A673 (cell line): ENCODE measurements at regions of chr22 and their contacts with region 1.

Region 1: DNA sequence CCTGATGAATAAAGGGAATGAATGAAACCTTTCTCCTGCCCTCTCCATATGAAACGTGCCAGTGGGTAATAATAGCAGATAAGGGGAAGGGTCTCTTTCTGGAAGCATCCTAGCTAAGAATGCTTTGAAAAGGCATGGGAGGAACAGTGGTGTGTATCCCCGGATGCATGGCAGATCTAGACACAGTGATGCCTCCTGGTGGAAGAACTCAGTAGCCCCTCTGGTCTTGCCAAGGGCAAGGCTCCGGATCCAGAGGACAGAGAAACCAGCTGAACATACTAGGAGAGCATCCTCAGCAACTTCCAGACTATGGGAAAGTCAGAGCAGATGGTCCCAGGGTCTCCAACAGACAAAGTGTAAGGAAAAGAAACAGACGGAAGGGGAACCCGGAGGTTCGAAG is 6.4 kb downstream of the BAIAP2L2 start:
- DNase-seq: no peak
- H3K4me3 ChIP-seq: no peak overlapping the region
- H3K27ac ChIP-seq: no peak overlapping the region
- H3K4me1 ChIP-seq: no peaks in the 10 kb centered on the region
- H3K27me3 ChIP-seq: no peaks in the 10 kb centered on the region
- CTCF ChIP-seq: 0 out of 2 replicates have a peak, but pooled peaks have one; percentile 26

Region 2: DNA sequence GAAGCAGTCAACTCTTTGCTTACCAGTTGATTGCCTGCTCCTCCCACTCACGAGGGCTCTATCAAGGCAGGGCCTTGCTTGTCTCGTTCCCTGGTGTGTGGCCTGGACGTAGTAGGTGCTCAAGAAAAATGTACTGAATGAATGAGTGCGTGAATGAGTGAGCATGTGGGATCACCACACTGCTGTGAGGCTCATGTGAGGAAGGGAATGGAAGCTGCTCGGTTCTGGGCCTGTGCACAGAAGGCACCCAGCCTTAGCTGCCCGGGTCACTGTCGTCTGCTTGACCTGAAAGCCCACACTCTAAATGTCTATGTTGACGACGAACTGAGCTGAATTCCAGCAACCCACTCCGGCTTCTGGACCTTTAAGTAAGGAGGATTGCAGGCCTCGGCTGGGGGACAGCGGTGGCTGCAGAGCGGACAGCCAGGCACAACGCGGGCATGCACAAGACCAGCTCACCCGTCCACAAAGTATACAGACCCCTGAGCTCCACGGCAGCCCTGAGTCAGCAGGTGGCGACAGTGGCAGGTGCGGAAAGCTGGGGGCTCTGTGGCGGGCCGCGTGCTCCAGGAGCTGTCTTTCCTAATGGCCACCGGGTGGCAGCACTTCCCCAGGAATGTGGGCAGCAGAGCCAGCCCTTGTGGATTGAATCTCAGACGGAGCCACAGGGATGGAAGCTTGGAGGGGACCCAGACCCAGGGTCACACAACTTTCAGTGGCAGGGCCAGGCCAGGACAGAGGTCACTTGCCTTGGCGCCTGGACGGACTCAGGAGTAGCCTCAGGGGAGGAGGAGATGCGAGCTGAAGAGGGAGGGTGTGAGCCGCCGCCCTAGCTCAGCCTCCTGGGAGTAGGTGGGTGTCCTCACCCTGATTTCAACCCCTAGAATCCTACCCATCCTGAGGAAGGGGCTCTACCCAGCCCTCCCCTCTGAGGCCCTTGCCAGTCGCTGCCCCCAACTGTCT is 51.9 kb before region 1 on chr22:
- CTCF ChIA-PET with region 1: interaction called, 10 read pairs
- POLR2A ChIA-PET with region 1: no interaction called
- intact Hi-C with region 1: no loop called
- DNase-seq: peak; percentile 85
- H3K4me3 ChIP-seq: no peak overlapping the region
- H3K27ac ChIP-seq: no peak overlapping the region
- H3K4me1 ChIP-seq: no peaks in the 10 kb centered on the region
- H3K27me3 ChIP-seq: no peaks in the 10 kb centered on the region
- CTCF ChIP-seq: peak; percentile 96

Region 3: DNA sequence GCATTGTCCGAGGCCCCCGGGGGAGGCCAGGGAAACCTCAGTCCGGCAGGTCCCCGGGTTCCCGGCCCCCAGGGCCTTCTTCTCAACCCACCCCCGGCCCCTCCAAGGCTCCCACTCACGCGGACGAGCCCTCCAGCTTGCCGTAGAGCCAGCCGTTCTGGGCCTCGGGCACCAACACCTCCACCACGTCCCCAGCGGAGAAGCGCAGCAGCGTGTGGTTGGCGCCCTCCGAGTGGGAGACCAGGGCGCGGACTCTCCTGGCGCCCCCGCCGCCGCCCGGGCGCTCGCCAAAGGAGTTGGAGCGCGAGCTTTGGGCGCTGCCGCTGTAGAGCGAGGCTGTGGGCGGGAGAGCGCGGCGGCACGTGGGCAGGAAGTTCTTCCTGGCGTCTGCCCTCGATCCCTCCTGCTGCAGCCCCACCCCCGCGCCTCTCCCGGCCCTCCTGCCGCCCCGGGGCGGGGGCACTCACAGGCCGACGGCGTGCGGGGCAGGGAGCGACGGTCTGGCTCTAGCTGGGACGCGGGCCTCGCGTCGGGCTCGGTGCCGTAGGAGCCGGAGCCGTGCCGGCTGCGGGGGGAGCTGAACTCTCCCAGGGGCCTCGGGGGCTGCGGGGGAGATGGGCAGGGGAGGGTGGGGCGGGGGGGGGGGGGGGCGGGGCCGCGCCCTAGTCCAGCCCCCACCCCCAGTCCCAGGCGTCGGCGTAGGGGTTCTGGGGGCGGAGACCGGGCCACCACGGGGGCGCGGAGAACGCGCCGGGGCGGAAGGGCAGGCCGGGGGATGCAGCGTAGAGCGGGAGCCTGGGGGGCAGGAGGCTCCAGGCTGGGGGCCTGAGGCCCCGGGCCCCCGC is 15.2 kb before region 1 on chr22:
- CTCF ChIA-PET with region 1: interaction called, 10 read pairs
- POLR2A ChIA-PET with region 1: interaction called, 17 read pairs
- intact Hi-C with region 1: no loop called
- DNase-seq: peak; percentile 48
- H3K4me3 ChIP-seq: peak overlapping the region; percentile 29
- H3K27ac ChIP-seq: no peak overlapping the region
- H3K4me1 ChIP-seq: peaks cover 8% of the 10 kb centered on the region
- H3K27me3 ChIP-seq: no peaks in the 10 kb centered on the region
- CTCF ChIP-seq: no peak